ENCODE measurements at regions of chr17 and their contacts with region 1.

Region 1: DNA sequence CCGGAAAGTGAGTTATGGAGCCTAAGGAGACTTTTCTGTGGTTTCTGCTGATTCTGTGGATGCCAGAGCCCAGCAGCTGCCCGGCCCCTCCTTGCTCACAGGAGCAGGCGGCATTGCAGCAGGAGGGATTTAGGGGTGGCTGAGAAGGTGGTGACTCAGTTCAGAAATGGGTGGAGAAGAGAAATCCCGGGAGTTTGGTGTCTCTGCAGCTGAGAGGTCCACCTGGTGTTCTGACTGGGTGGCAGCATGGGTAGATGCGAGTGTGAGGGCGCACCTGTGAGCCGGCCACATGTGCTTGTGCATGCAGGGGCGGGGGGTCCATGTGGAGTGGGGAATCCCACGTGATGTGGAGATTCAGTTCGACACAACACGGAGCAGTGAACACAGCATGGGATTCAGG is 16.1 kb upstream of the SPPL2C start:
- DNase-seq: no peak
- ATAC-seq: no peak
- H3K4me3 ChIP-seq: no peak overlapping the region
- H3K27ac ChIP-seq: no peak overlapping the region
- H3K4me1 ChIP-seq: no peaks in the 10 kb centered on the region
- CTCF ChIP-seq: no peak
- EP300 ChIP-seq: no peak
- POLR2A ChIP-seq: no peak
- RAD21 ChIP-seq: peak in 1 of 2 experiments; percentile 23; a peak in 1 of 5 replicates

Region 2: GRCh38 chr17:45648642-45649041 is 180.0 kb before region 1 on chr17:
- CTCF ChIA-PET with region 1: interaction called, 29 read pairs
- POLR2A ChIA-PET with region 1: no interaction called
- DNase-seq: no peak
- ATAC-seq: peak in 1 of 2 experiments; percentile 61; a peak in 3 of 6 replicates
- H3K4me3 ChIP-seq: no peak overlapping the region
- H3K27ac ChIP-seq: no peak overlapping the region
- H3K4me1 ChIP-seq: no peaks in the 10 kb centered on the region
- CTCF ChIP-seq: no peak
- EP300 ChIP-seq: no peak
- POLR2A ChIP-seq: no peak
- RAD21 ChIP-seq: no peak

Region 3: DNA sequence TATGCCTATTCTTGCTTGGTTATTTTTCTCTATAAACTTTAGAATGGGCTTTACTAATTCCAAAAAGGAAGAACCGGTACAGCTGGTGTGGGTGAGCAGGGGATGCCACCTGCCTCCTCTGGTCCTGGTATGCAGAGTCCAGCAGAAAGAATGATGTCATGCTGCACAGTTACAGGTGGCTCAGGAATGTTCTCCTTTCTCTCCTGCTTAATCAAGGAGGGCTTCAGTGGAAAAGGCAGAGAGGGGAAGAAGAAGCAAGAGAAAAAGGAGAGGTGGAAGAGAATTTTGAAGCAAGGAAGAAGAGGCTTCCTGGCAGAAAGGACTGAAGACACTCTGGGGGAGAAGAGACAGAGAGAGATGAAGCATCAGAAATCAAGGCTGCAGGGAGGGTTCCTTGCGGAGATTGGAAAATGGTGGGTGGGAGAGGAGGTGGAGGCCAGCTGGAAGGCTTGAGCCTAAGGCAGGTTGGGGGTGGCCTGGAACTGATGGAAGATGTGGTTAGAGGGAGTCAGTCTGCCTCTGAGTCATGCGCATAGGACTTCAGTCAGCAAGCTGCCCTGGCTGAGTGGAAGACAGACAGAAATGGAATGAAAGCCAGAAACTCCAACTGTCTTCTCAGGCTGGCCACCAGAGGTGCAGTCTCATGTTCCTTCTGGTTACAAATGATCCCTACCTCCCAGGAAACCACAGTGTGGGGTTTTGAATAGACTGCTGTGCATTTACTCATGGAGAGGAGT is 109.1 kb before region 1 on chr17:
- CTCF ChIA-PET with region 1: interaction called, 44 read pairs
- POLR2A ChIA-PET with region 1: no interaction called
- DNase-seq: peak; percentile 77 to 82
- ATAC-seq: peak; percentile 89 to 93
- H3K4me3 ChIP-seq: no peak overlapping the region
- H3K27ac ChIP-seq: no peak overlapping the region
- H3K4me1 ChIP-seq: peaks cover 5% of the 10 kb centered on the region; the same call in 2 of the 3 replicates
- CTCF ChIP-seq: 0 out of 3 replicates have a peak, but pooled peaks have one; percentile 24
- EP300 ChIP-seq: no peak
- POLR2A ChIP-seq: no peak
- RAD21 ChIP-seq: peak in 1 of 2 experiments; percentile 21; a peak in 1 of 5 replicates

Region 4: DNA sequence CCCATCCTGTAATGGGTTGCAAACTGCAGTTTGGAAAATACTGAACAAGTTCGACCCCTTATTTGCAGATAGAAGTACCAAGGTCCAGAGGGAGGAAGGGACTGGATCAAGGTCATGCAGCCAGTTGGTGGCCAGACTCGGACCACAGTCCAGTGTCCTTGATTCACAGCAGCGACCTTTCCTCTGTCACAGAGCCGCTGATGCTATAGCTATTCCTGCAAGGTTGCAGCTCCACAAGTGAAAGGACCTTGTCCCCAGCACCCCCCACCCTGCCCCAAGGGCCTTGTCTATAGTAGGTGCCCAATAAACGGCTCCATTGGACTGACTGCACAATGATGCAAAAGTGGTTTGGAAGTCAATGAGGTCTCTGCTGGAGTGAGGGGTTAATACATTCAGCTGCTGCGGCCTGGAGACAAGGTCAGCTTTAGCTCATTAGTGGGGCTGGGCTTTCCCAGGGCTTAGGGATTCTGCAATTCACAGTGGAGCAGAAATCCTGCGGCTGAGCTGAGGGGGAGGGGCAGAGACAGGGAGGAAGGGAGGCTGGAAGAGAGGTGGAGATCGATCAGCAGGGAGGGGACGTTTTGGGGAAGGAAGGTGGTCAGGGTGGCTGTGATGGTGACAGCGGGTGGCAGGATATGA is 57.9 kb before region 1 on chr17:
- CTCF ChIA-PET with region 1: interaction called, 13 read pairs
- POLR2A ChIA-PET with region 1: no interaction called
- DNase-seq: no peak
- ATAC-seq: no peak
- H3K4me3 ChIP-seq: no peak overlapping the region
- H3K27ac ChIP-seq: no peak overlapping the region
- H3K4me1 ChIP-seq: peaks cover 7% of the 10 kb centered on the region
- CTCF ChIP-seq: no peak
- EP300 ChIP-seq: no peak
- POLR2A ChIP-seq: no peak
- RAD21 ChIP-seq: no peak

Region 5: GRCh38 chr17:45801421-45801820 is 27.2 kb before region 1 on chr17:
- CTCF ChIA-PET with region 1: interaction called, 16 read pairs
- POLR2A ChIA-PET with region 1: no interaction called
- DNase-seq: no peak
- ATAC-seq: no peak
- H3K4me3 ChIP-seq: no peak overlapping the region
- H3K27ac ChIP-seq: no peak overlapping the region
- H3K4me1 ChIP-seq: no peaks in the 10 kb centered on the region
- CTCF ChIP-seq: no peak
- EP300 ChIP-seq: no peak
- POLR2A ChIP-seq: no peak
- RAD21 ChIP-seq: no peak

Region 6: DNA sequence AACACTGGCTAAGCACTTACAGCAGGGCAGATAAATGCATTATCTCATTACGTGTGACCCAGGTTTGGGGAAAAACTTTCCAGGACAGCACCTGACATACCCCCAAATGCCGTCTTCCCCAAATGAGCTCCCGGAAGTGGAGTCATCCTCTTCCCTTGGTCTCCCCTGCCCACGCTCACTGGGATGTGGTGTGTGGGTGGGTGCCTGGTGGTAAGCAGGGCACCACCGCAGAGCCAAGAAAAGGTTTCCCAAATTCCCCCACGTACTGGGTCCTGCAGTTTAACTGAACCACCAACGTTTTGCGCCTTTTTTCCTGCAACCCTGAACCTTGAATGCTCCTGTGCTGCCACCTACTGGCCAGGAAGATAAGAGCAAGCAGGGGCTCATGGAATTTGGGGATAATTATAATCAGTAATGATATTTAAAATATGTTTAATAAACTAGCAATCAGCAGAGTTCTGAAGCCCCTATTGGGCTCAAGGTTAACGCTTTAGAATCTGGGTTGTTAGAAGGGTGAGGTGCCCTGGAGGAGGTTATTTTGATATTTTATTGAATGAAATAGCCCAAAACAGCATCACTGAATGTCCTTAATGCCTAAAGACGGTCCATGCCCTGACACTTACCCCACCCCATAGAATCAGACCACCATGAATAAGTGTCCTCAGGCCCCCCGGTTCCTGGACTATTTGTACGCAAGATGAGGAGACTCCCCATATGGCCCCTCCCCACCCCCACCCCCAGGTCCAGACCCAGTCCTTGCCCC is 24.1 kb after region 1 on chr17:
- CTCF ChIA-PET with region 1: interaction called, 225 read pairs
- POLR2A ChIA-PET with region 1: no interaction called
- DNase-seq: peak; percentile 57 to 70
- ATAC-seq: peak; percentile 25 to 73; a peak in 4 of 6 replicates
- H3K4me3 ChIP-seq: peak overlapping the region; percentile 14; the same call in 1 of the 3 replicates
- H3K27ac ChIP-seq: peak overlapping the region in 1 of 2 experiments; percentile 61; a peak in 1 of 6 replicates
- H3K4me1 ChIP-seq: 0 out of 3 replicates have a peak, but pooled peaks cover 2% of the 10 kb centered on the region
- CTCF ChIP-seq: peak; percentile 97
- EP300 ChIP-seq: no peak
- POLR2A ChIP-seq: no peak
- RAD21 ChIP-seq: peak; percentile 94 to 95

Region 7: GRCh38 chr17:45894022-45894784 is 65.6 kb after region 1 on chr17 and contains the start of gene MAPT:
- CTCF ChIA-PET with region 1: interaction called, 14 read pairs
- POLR2A ChIA-PET with region 1: no interaction called
- DNase-seq: peak; percentile 93 to 97
- ATAC-seq: peak; percentile 75 to 93
- H3K4me3 ChIP-seq: peak within 1 kb of the TSS; percentile 69
- H3K27ac ChIP-seq: peak within 1 kb of the TSS; percentile 76 to 85
- H3K4me1 ChIP-seq: peaks cover 22% of the 10 kb centered on the region
- CTCF ChIP-seq: peak; percentile 99
- EP300 ChIP-seq: no peak
- POLR2A ChIP-seq: peak; percentile 92
- RAD21 ChIP-seq: peak; percentile 15 to 54; a peak in 4 of 5 replicates
- polyA plus RNA-seq, gene MAPT: 1.1 and 1.2 TPM in 2 replicates

Measured in A549 (cell line).